MCF 10A (cell line): ENCODE measurements at regions of chr15 and their contacts with region 1.

Region 1: GRCh38 chr15:59492389-59493377 is 54.7 kb downstream of the FAM81A start:
- DNase-seq: peak; percentile 82
- H3K4me3 Mint-ChIP-seq: no peak overlapping the region
- H3K27ac Mint-ChIP-seq: no peak overlapping the region
- H3K4me1 Mint-ChIP-seq: peaks cover 8% of the 10 kb centered on the region
- H3K27me3 Mint-ChIP-seq: no peaks in the 10 kb centered on the region
- CTCF ChIP-seq: peak; percentile 84

Region 2: DNA sequence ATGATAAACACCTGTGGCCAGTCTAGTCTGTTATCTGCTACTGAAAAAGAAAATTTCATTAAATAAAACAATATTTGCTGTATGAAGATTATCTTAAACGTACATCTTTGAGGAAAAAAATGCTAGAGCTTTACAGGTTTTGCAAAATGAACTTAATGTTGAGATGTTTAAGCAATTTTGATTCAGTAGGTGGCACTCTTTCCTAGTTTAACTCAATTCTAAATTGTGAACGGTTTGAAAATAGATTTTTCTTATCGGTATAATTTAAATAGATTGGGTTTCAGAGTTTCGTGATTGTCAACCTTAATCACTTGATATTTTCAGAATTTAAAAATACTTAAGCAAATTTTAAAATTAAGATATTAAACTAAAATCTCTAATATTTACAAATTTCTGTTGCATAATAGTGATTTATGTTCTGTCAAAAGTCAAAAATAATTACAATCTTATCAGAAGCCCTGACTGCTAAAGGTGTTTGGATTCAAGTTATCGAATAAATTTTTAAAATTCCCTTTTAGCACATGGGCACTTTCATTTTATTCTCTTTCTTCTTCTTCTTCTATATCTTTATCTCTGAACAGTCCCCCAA is 512.2 kb before region 1 on chr15:
- CTCF ChIA-PET with region 1: interaction called, 14 read pairs
- POLR2A ChIA-PET with region 1: no interaction called
- intact Hi-C with region 1: loop called (anchors 2 kb)
- DNase-seq: peak; percentile 38
- H3K4me3 Mint-ChIP-seq: no peak overlapping the region
- H3K27ac Mint-ChIP-seq: no peak overlapping the region
- H3K4me1 Mint-ChIP-seq: no peaks in the 10 kb centered on the region
- H3K27me3 Mint-ChIP-seq: peaks cover 18% of the 10 kb centered on the region
- CTCF ChIP-seq: peak; percentile 41

Region 3: GRCh38 chr15:59104912-59105732 is 387.6 kb before region 1 on chr15 and contains the start of gene CCNB2:
- CTCF ChIA-PET with region 1: interaction called, 25 read pairs
- POLR2A ChIA-PET with region 1: interaction called, 3 read pairs
- intact Hi-C with region 1: loop called (anchors 2 kb)
- DNase-seq: peak; percentile 96
- H3K4me3 Mint-ChIP-seq: peak within 1 kb of the TSS; percentile 82
- H3K27ac Mint-ChIP-seq: peak within 1 kb of the TSS; percentile 91
- H3K4me1 Mint-ChIP-seq: peaks cover 7% of the 10 kb centered on the region
- H3K27me3 Mint-ChIP-seq: no peaks in the 10 kb centered on the region
- CTCF ChIP-seq: no peak
- total RNA-seq, gene CCNB2: 25.7 and 54.1 TPM in 2 replicates

Region 4: DNA sequence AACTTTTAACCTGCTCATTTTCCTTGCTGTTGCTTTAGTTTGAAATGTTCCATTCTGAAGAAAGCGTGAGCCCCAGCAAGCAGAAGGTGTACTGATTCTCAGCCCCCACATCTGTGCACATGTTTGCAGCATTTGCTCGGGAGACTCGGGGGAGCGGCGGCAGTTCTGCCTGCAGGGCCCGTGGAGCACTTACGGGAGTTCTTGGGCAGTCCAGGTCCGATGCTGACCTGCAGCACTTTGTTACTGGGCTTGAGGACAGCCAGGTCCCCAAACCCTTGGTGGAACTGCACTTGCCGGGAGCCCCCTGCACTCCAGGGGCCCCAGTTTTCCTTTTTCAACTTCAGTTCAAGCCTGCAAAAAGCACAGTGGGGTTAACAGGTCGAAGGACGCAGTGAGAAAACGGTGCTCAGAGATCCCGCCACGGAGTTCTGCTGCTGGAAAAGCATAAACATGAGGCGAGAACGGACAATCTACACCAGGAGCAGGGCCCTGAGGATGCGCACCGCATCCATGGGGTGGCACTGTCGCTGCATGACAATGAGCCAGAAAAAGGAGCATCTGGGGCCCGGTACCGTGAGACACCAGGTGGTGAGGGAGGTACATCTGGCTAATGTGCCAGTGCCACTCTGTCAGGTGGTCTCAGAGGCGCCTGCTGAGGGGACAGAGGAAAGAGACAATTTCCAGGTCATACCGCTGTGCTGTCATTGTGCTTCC is 331.6 kb before region 1 on chr15:
- CTCF ChIA-PET with region 1: interaction called, 4 read pairs
- POLR2A ChIA-PET with region 1: interaction called, 3 read pairs
- intact Hi-C with region 1: loop called (anchors 1 kb)
- DNase-seq: peak; percentile 46
- H3K4me3 Mint-ChIP-seq: no peak overlapping the region
- H3K27ac Mint-ChIP-seq: peak overlapping the region; percentile 46
- H3K4me1 Mint-ChIP-seq: peaks cover 14% of the 10 kb centered on the region
- H3K27me3 Mint-ChIP-seq: no peaks in the 10 kb centered on the region
- CTCF ChIP-seq: peak; percentile 45

Region 5: GRCh38 chr15:59174835-59175831 is 317.6 kb before region 1 on chr15:
- CTCF ChIA-PET with region 1: interaction called, 6 read pairs
- POLR2A ChIA-PET with region 1: no interaction called
- intact Hi-C with region 1: loop called (anchors 1 kb)
- DNase-seq: peak; percentile 84
- H3K4me3 Mint-ChIP-seq: peak overlapping the region; percentile 29
- H3K27ac Mint-ChIP-seq: peak overlapping the region; percentile 93
- H3K4me1 Mint-ChIP-seq: peaks cover 22% of the 10 kb centered on the region
- H3K27me3 Mint-ChIP-seq: no peaks in the 10 kb centered on the region
- CTCF ChIP-seq: peak; percentile 69

Region 6: DNA sequence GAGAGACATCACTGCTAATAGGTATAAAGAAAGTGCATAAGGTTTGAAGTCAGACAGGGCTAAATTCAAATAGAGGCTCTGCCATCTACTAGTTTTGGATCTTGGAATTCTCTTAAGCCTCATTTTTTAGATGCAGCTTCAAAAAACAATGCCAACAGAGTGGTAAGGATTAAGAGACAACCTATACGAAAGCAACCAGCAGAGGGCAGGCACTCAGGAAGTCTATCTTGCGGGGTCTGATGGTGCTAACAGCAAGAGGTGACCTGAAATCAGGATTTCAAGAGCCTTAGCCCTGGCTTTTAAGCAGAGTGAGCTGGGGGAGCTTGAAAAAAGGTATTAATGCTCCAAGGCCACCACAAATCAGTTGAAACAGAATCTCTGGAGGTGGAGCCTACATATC is 245.3 kb before region 1 on chr15:
- CTCF ChIA-PET with region 1: interaction called, 12 read pairs
- POLR2A ChIA-PET with region 1: no interaction called
- intact Hi-C with region 1: loop called (anchors 1 kb)
- DNase-seq: peak; percentile 77
- H3K4me3 Mint-ChIP-seq: no peak overlapping the region
- H3K27ac Mint-ChIP-seq: no peak overlapping the region
- H3K4me1 Mint-ChIP-seq: peaks cover 5% of the 10 kb centered on the region
- H3K27me3 Mint-ChIP-seq: no peaks in the 10 kb centered on the region
- CTCF ChIP-seq: peak; percentile 57